ENCODE measurements at regions of chr11 and their contacts with region 1.

Region 1: DNA sequence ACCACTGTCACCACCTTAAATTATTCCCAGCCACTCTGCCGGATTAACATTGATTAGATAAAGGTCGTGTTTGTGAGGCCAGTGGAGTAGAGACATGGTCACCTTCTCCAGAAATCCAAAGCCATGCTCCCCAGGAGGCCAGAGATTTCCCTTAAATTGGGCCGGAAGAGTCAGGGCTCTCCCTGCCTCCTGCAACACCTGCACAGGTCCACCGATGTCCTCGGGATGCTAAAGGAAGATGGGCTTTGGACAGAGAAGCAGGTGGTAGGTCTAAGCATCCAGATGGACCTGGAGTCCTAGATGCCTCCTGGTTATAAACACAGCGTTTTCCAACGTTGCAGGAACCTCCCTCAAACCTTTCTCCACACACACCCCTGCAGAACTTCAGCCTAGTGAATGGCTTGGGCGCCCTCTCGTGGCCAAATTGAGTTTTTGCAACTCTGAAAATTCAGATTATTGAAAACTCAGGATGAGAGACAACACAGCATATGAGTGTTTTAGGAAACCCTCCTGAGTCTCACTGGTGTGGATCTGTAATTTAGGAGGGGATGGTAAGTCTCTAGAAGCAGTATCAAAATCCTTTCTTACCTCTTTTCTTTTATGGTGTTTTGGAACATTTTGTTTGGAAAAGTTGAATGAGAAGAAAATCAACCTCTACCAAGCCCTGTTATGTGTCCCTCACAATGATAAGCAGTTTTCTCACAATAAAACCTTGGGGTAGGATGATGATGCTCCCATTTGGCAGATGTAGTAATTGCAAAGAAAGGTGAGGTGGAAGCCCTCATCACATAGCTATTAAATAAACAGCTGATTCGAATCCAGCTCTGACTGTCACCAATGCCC is 109.6 kb downstream of the RRAS2 start:
- DNase-seq: peak; percentile 35
- ATAC-seq: peak; percentile 65
- H3K4me3 ChIP-seq: no peak overlapping the region
- H3K27ac ChIP-seq: no peak overlapping the region
- H3K4me1 ChIP-seq: no peaks in the 10 kb centered on the region
- H3K27me3 ChIP-seq: peaks cover 0 to 23% of the 10 kb centered on the region in 2 experiments; a peak in 2 of 5 replicates
- CTCF ChIP-seq: peak; percentile 89
- EP300 ChIP-seq: no peak
- POLR2A ChIP-seq: no peak
- RAD21 ChIP-seq: peak; percentile 78

Region 2: DNA sequence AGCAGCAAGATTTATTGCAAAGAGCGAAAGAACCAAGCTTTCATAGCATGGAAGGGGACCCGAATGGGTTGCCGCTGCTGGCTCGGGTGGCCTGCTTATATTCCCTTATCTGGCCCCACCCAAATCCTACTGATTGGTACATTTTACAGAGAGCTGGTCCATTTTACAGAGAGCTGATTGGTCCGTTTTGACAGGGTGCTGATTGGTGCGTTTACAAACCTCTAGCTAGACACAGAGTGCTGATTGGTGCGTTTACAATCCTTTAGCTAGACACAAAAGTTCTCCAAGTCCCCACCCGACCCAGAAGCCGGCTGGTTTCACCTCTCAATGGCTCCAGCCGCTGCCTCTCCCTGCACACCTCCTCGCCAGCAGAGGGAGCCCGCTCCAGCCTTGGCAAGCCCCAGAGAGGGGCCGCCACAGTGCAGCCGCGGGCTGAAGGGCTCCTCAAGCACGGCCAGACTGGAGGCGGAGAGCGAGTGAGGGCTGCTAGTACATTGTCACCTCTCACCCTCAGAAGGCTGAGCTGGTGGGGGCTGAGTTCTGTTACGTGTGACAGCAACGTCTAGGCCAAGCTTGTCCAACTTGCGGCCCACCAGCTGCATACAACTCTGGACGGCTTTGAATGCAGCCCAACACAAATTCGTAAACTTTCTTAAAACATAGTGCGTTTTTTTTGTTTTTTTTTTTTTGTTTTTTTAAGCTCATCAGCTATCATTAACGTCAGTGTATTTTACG is 762.2 kb before region 1 on chr11:
- CTCF ChIA-PET with region 1: interaction called, 8 read pairs
- POLR2A ChIA-PET with region 1: no interaction called
- in situ Hi-C with region 1: no loop called
- intact Hi-C with region 1: loop called (anchors 1 kb)
- DNase-seq: peak; percentile 73
- ATAC-seq: peak; percentile 100
- H3K4me3 ChIP-seq: peak overlapping the region; percentile 27 to 79 (median 69); a peak in 5 of 6 replicates
- H3K27ac ChIP-seq: no peak overlapping the region
- H3K4me1 ChIP-seq: peaks cover 10% of the 10 kb centered on the region; the same call in 1 of the 2 replicates
- H3K27me3 ChIP-seq: no peaks in the 10 kb centered on the region; a peak in 2 of 5 replicates
- CTCF ChIP-seq: peak; percentile 92
- EP300 ChIP-seq: no peak
- POLR2A ChIP-seq: peak in 1 of 2 experiments; percentile 38; a peak in 1 of 4 replicates
- RAD21 ChIP-seq: peak; percentile 48

Region 3: DNA sequence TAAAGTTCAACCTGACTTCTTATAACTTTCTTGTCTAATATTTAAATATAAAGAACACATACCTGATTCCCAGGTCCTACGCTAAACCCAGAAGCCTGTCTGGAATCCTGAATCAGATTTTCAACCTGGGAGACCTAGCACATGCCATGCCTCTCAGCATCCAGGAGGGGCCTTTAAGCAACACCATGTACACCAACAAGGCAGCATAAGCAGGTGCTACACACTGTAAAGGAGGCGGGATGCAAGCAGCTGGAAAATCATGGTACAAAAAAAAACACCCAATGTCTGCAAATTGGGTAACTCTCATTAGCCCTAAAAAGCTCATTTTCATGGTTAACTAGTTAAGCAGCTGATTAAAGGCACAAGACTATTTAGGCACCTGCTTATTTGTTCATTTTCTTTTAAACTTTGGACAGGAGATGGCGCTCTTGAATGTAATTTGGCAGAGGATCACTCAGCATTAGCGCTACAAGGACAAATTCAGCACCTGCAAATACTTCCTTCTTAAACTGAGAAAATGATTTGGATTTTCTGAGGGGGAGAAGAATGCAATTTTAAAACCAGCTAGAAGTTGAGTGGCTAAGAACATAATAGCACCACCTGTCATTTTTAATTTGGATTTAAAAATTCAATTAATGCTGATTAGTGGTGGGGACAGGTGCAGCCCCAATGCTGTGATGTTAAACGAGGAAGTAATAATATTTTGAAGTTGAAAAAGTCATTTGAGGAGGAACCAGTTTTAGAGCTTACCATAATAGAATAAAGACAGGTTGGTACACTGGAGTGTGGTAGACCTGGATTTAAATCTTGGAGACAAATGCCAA is 476.9 kb before region 1 on chr11:
- CTCF ChIA-PET with region 1: interaction called, 6 read pairs
- POLR2A ChIA-PET with region 1: no interaction called
- in situ Hi-C with region 1: loop called (anchors 5 kb)
- intact Hi-C with region 1: loop called (anchors 1 kb)
- DNase-seq: peak; percentile 58
- ATAC-seq: peak; percentile 77
- H3K4me3 ChIP-seq: no peak overlapping the region
- H3K27ac ChIP-seq: no peak overlapping the region
- H3K4me1 ChIP-seq: no peaks in the 10 kb centered on the region
- H3K27me3 ChIP-seq: no peaks in the 10 kb centered on the region
- CTCF ChIP-seq: peak; percentile 59
- EP300 ChIP-seq: no peak
- POLR2A ChIP-seq: no peak
- RAD21 ChIP-seq: peak; percentile 38; the same call in 1 of the 2 replicates

Region 4: GRCh38 chr11:13955971-13956421 is 293.3 kb before region 1 on chr11:
- CTCF ChIA-PET with region 1: interaction called, 42 read pairs
- POLR2A ChIA-PET with region 1: no interaction called
- in situ Hi-C with region 1: loop called (anchors 5 kb)
- intact Hi-C with region 1: loop called (anchors 1 kb)
- DNase-seq: peak; percentile 58
- ATAC-seq: peak; percentile 72
- H3K4me3 ChIP-seq: no peak overlapping the region
- H3K27ac ChIP-seq: no peak overlapping the region
- H3K4me1 ChIP-seq: no peaks in the 10 kb centered on the region
- H3K27me3 ChIP-seq: peaks cover 0 to 22% of the 10 kb centered on the region in 2 experiments; a peak in 3 of 5 replicates
- CTCF ChIP-seq: peak; percentile 84
- EP300 ChIP-seq: no peak
- POLR2A ChIP-seq: no peak
- RAD21 ChIP-seq: peak; percentile 59

Region 5: DNA sequence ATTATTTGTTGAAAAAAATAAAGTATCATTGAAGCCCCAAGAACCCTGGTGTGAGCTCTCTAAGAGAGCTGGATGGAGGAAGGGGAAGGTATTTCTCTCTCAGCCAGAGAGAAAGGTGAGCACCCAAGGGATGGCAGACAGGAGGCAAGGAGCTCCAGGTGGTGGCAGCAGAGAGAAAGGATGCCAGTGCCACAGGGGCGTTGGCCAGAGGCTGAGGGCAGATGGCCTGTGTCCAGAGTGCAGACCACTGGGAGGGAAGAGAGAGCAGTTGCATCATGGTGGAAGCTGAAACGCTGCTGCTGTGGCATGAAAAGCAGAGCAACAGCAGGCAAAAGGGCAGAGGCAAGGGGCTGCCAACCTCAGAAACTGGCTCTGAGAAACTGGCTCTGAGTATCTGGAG is 278.4 kb before region 1 on chr11:
- CTCF ChIA-PET with region 1: interaction called, 3 read pairs
- POLR2A ChIA-PET with region 1: no interaction called
- in situ Hi-C with region 1: no loop called
- intact Hi-C with region 1: loop called (anchors 5 kb)
- DNase-seq: peak; percentile 30
- ATAC-seq: peak; percentile 94
- H3K4me3 ChIP-seq: no peak overlapping the region
- H3K27ac ChIP-seq: no peak overlapping the region
- H3K4me1 ChIP-seq: peaks cover under 1% of the 10 kb centered on the region; the same call in 1 of the 2 replicates
- H3K27me3 ChIP-seq: no peaks in the 10 kb centered on the region
- CTCF ChIP-seq: peak; percentile 56
- EP300 ChIP-seq: no peak
- POLR2A ChIP-seq: no peak
- RAD21 ChIP-seq: 0 out of 2 replicates have a peak, but pooled peaks have one; percentile 23

Region 6: GRCh38 chr11:14320020-14320419 is 70.7 kb after region 1 on chr11:
- CTCF ChIA-PET with region 1: no interaction called
- POLR2A ChIA-PET with region 1: no interaction called
- in situ Hi-C with region 1: no loop called
- intact Hi-C with region 1: no loop called
- DNase-seq: no peak
- ATAC-seq: no peak
- H3K4me3 ChIP-seq: no peak overlapping the region
- H3K27ac ChIP-seq: no peak overlapping the region
- H3K4me1 ChIP-seq: peaks cover 15% of the 10 kb centered on the region; the same call in 1 of the 2 replicates
- H3K27me3 ChIP-seq: no peaks in the 10 kb centered on the region; a peak in 1 of 5 replicates
- CTCF ChIP-seq: no peak
- EP300 ChIP-seq: no peak
- POLR2A ChIP-seq: no peak
- RAD21 ChIP-seq: no peak

Region 7: GRCh38 chr11:14358729-14359439 is 109.5 kb after region 1 on chr11 and contains the start of gene RRAS2:
- CTCF ChIA-PET with region 1: no interaction called
- POLR2A ChIA-PET with region 1: no interaction called
- in situ Hi-C with region 1: no loop called
- intact Hi-C with region 1: no loop called
- DNase-seq: peak; percentile 69
- ATAC-seq: peak; percentile 92
- H3K4me3 ChIP-seq: peak within 1 kb of the TSS; percentile 90 to 93 (median 93)
- H3K27ac ChIP-seq: peak within 1 kb of the TSS; percentile 69
- H3K4me1 ChIP-seq: peaks cover 34% of the 10 kb centered on the region
- H3K27me3 ChIP-seq: no peaks in the 10 kb centered on the region; a peak in 1 of 5 replicates
- CTCF ChIP-seq: no peak; the same call in 1 of the 2 replicates
- EP300 ChIP-seq: 0 out of 4 replicates have a peak, but pooled peaks of 1 of the 2 experiments have one; percentile 34
- POLR2A ChIP-seq: peak; percentile 76 to 93
- RAD21 ChIP-seq: no peak
- total RNA-seq, gene RRAS2: 44.1 and 62.9 TPM in 2 replicates

Measured in HepG2 (cell line).